ENCODE measurements at regions of chr2 and their contacts with region 1.

Region 1: GRCh38 chr2:188291617-188292347 is at the start of gene GULP1:
- DNase-seq: peak; percentile 47 to 82
- ATAC-seq: peak; percentile 69 to 82
- H3K4me3 ChIP-seq: peak within 1 kb of the TSS; percentile 84
- H3K27ac ChIP-seq: peak within 1 kb of the TSS; percentile 97 to 100
- H3K4me1 ChIP-seq: peaks cover 21% of the 10 kb centered on the region
- CTCF ChIP-seq: peak; percentile 71
- EP300 ChIP-seq: no peak
- POLR2A ChIP-seq: peak; percentile 20; the same call in 1 of the 2 replicates
- RAD21 ChIP-seq: peak; percentile 48 to 68
- polyA plus RNA-seq, gene GULP1: 80.7 and 89.2 TPM in 2 replicates

Region 2: DNA sequence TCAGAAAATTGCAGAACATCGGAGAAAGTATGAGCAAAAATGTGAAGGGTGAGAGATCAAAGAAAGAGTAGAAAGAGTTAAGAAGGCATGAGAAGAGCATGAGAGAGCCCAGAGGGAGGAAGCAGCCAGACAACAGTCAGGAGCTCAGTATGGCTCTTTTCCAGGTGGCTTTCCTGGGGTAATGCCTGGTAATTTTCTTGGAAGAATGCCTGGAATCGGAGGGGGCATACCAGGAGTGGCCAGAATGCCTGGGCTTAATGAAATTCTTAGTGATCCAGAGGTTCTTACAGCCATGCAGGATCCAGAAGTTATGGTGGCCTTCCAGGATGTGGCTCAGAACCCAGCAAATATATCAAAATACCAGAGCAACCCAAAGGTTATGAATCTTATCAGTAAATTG is 465.8 kb before region 1 on chr2:
- CTCF ChIA-PET with region 1: no interaction called
- POLR2A ChIA-PET with region 1: no interaction called
- DNase-seq: no peak
- ATAC-seq: no peak
- H3K4me3 ChIP-seq: no peak overlapping the region
- H3K27ac ChIP-seq: no peak overlapping the region
- H3K4me1 ChIP-seq: 0 out of 3 replicates have a peak, but pooled peaks cover 3% of the 10 kb centered on the region
- CTCF ChIP-seq: no peak
- EP300 ChIP-seq: no peak
- POLR2A ChIP-seq: no peak
- RAD21 ChIP-seq: no peak

Region 3: DNA sequence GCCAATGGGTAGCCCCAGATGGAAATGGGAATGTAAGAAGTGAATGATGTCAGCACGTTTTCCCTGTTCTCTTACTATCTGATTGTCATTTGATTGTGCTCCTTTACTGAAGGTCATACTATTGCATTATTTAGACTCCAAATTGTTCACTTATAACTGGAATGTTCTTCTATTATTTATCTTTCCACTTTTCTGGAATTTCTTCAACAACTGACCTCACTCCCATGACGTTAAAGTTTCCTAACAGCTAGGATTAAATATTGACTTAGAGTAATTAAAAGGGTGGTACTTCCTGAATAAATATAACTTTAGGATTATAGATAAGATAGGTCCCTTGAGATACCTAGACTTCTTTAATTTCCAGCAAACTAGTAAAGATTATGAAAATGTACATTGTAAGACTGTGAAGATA is 11.0 kb before region 1 on chr2:
- CTCF ChIA-PET with region 1: interaction called, 11 read pairs
- POLR2A ChIA-PET with region 1: interaction called, 20 read pairs
- DNase-seq: peak in 1 of 2 experiments; percentile 82
- ATAC-seq: peak; percentile 30 to 91; a peak in 4 of 6 replicates
- H3K4me3 ChIP-seq: no peak overlapping the region
- H3K27ac ChIP-seq: peak overlapping the region in 1 of 2 experiments; percentile 59; a peak in 3 of 6 replicates
- H3K4me1 ChIP-seq: peaks cover 17% of the 10 kb centered on the region; the same call in 2 of the 3 replicates
- CTCF ChIP-seq: no peak
- EP300 ChIP-seq: peak; percentile 45 to 90; a peak in 3 of 5 replicates
- POLR2A ChIP-seq: no peak
- RAD21 ChIP-seq: no peak; a peak in 1 of 5 replicates

Region 4: DNA sequence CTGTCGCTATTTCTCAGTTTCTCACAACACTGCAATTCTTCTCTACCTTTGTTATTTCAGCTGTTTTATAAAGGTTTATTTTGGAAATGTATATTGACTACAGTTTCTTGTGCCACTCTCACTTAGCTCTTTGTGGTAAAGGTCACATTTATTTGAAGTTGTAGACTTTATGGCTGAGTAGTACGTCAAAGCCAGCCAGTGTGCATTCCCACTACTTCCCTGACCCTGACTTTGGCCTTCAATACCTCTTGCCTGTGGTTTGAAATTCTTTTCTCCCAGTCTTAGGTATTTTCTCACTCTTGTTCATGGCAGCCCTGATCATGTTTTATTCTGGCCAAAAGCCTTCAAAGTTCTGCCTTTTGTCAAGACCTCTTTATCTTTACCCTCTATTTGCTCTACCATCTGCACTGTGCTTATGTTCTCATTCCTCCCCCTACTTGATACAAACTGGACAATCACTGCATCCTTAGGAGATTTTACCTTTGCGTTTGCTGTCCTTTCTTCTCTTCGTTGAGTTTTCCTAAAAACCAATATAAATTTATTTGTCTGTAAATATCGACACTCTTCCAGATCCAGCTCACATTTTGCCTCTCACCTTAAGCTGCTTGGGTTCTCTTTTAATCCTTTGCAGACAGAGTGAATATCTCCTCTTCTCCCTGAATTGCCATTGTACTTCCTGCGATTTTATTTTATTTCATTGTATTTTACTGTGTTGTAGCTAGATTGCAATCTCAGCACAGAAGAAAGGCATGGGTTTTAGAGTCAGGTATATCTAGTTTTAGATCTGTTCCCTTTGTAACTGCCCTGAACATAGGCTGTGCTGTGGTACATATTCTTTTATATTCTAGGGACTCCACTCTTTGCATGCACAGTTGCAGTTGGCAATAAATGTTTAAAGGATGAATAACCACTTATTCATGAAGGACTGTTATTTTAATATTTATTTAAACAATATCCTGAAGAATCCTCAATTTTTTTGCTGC is 31.1 kb after region 1 on chr2:
- CTCF ChIA-PET with region 1: interaction called, 3 read pairs
- POLR2A ChIA-PET with region 1: interaction called, 13 read pairs
- DNase-seq: peak in 1 of 2 experiments; percentile 77
- ATAC-seq: peak; percentile 60 to 86
- H3K4me3 ChIP-seq: 0 out of 3 replicates have a peak overlapping the region, but pooled peaks have one; percentile 16
- H3K27ac ChIP-seq: peak overlapping the region; percentile 56 to 74
- H3K4me1 ChIP-seq: peaks cover 68% of the 10 kb centered on the region
- CTCF ChIP-seq: no peak
- EP300 ChIP-seq: peak in 1 of 2 experiments; percentile 61; a peak in 2 of 5 replicates
- POLR2A ChIP-seq: no peak
- RAD21 ChIP-seq: no peak

Region 5: DNA sequence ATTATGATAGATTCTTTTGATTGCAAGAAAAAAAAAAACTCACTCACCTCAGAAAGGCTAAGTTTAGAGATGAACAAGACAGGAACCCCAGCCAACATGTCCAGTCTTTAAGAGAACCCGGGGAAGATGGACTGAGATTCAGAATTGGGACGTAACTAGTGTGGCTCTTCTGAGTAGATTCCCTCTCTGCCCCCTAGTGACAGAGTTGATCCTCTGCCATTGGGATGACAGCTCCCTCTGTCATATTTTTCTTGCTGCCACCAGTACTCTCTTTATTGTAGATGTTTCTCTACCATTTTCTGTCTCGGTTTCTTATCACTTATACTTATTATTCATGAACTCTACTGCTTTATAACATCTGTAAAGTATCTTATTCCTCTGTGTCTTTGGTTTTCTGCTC is 77.6 kb after region 1 on chr2:
- CTCF ChIA-PET with region 1: interaction called, 12 read pairs
- POLR2A ChIA-PET with region 1: interaction called, 9 read pairs
- DNase-seq: peak; percentile 26 to 69
- ATAC-seq: peak; percentile 89 to 96
- H3K4me3 ChIP-seq: no peak overlapping the region
- H3K27ac ChIP-seq: no peak overlapping the region
- H3K4me1 ChIP-seq: peaks cover 12% of the 10 kb centered on the region; the same call in 2 of the 3 replicates
- CTCF ChIP-seq: peak; percentile 61
- EP300 ChIP-seq: no peak
- POLR2A ChIP-seq: no peak
- RAD21 ChIP-seq: peak; percentile 72 to 75

Region 6: GRCh38 chr2:188512456-188512855 is 220.7 kb after region 1 on chr2:
- CTCF ChIA-PET with region 1: interaction called, 12 read pairs
- POLR2A ChIA-PET with region 1: interaction called, 6 read pairs
- DNase-seq: peak; percentile 4 to 65
- ATAC-seq: peak; percentile 68 to 84; a peak in 5 of 6 replicates
- H3K4me3 ChIP-seq: no peak overlapping the region; the same call in 2 of the 3 replicates
- H3K27ac ChIP-seq: peak overlapping the region in 1 of 2 experiments; percentile 39; a peak in 2 of 6 replicates
- H3K4me1 ChIP-seq: peaks cover 12% of the 10 kb centered on the region; the same call in 1 of the 3 replicates
- CTCF ChIP-seq: peak; percentile 86
- EP300 ChIP-seq: no peak
- POLR2A ChIP-seq: no peak
- RAD21 ChIP-seq: peak; percentile 89 to 95